Ovary (tissue), 10 donors: ENCODE measurements at regions of chr9 and their contacts with region 1.

Region 1: GRCh38 chr9:25716220-25716872 is 38.1 kb upstream of the TUSC1 start:
- DNase-seq: no peak
- H3K4me3 ChIP-seq: no peak overlapping the region
- H3K27ac ChIP-seq: no peak overlapping the region
- H3K4me1 ChIP-seq: no peaks in the 10 kb centered on the region
- H3K27me3 ChIP-seq: no peaks in the 10 kb centered on the region
- CTCF ChIP-seq: no peak
- EP300 ChIP-seq: no peak
- POLR2A ChIP-seq: no peak

Region 2: GRCh38 chr9:25691786-25692185 is 24.6 kb before region 1 on chr9:
- intact Hi-C with region 1: loop called in 1 of 4 experiments (anchors 2 kb)
- DNase-seq: no peak
- H3K4me3 ChIP-seq: no peak overlapping the region
- H3K27ac ChIP-seq: no peak overlapping the region
- H3K4me1 ChIP-seq: no peaks in the 10 kb centered on the region
- H3K27me3 ChIP-seq: no peaks in the 10 kb centered on the region
- CTCF ChIP-seq: no peak
- EP300 ChIP-seq: no peak
- POLR2A ChIP-seq: no peak